ENCODE measurements at regions of chr19 and their contacts with region 1.

Region 1: DNA sequence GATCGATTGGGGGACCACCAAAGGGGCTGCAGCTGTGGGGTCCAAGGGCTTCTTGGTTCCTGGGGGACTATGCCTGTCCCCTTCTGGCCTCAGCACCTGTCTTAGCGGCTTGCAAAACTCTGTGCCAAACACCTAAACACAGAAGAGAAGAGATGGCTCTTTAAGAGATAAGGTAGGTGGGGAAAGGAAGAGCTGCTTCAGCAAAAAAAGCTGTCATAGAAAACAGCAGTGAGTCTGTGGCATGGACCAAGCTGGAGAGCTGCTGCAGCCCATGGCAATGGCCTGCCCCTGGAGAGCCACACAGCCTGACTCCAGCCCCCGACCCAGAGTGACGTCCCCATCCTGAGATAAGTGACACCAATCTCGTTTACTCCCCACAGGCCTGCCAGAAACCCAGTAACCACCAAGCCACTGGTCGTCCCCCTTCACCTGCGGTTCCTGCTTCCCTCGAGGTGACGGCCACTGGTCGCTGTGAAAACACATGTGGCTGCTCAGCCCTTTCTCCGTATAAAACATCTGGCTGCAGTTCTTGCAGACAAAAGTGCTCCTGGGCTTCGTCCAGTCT is 25.0 kb upstream of the NAPA start:
- DNase-seq: no peak
- ATAC-seq: no peak
- H3K4me3 ChIP-seq: no peak overlapping the region
- H3K27ac ChIP-seq: no peak overlapping the region
- H3K4me1 ChIP-seq: no peaks in the 10 kb centered on the region
- H3K27me3 ChIP-seq: peaks cover 0 to 11% (median 6%) of the 10 kb centered on the region in 3 donors
- CTCF ChIP-seq: no peak

Region 2: DNA sequence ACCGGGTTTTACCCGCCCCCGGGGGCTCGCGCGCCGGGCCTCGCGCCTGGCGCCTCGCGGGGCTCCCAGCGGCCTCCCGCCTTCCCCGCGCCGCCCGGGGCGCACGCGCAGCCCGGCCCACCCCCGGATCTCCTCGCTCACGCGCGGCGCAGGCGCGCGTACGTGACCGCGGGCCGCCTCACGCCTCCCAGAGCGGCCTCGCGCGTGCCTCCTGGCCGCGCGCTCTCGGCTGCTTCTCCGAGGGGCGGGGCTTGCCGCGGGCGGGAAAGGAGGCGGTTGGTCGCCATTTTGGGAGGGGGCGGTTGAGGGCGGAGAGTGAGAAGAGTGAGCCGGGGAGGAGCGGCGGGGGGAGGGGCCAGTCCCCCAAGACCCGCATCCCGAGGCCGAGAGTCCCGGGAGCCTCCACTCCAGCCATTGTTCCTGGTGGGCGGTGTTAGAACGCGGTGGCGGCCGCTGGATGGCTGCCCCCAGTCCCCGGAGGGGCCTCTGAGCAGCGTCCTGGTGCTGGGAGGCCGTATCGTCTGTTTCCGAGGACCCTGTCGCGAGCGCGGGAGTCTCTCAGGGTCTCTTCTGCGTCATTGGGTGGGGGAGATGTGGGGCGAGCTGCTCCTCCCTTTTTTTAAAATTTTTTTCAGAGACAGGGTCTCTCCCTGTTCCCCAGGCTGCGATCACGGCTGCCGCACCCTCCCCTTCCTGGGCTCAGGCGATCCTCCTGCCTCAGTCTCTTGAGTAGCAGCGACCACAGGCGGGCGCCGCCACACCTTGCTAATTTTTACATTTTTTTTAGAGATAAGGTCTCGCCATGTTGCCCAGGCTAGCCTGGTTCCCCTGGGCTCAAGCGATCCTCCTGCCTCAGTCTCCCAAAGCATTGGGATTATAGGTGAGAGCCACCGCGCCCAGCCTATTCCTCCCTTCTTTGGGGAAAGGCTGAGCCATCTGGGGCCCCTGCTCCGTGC is 33.5 kb after region 1 on chr19 and contains the start of gene ZNF541:
- intact Hi-C with region 1: loop called in 1 of 2 experiments (anchors 5 kb)
- DNase-seq: peak; percentile 72
- ATAC-seq: peak in 3 of 4 donors; percentile 44 to 57 (median 52)
- H3K4me3 ChIP-seq: peak within 1 kb of the TSS; percentile 58
- H3K27ac ChIP-seq: no peak within 1 kb of the TSS
- H3K4me1 ChIP-seq: no peaks in the 10 kb centered on the region
- H3K27me3 ChIP-seq: peaks cover 3 to 20% (median 5%) of the 10 kb centered on the region in 3 donors
- CTCF ChIP-seq: no peak
- total RNA-seq, gene ZNF541: 0.13 to 0.73 (median 0.32) TPM

Region 3: DNA sequence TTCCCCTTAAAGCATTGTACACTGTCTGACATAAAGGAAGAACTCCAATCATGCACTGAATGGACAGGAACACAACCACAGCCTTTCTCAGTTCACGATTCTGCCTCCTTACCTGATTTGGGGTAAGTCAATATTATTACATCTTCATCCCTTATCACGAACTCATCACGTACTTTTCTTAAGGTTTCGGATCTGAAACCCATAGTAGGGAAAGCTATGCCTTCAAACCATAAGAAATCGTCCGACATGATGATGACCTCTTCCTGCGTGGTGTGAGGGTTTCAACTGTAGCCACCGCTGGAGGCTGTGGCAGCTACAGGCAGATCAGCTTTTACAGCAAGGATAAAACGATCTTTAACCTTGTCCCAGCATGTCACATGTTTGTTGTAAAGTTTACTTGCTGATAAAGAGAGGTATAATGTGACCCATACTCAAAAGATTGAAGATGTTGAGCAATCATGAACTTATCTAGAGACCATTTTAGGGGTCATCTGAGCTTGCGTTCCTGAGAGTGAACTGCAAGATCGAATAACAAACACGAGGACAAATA is 346.3 kb after region 1 on chr19 and contains the start of gene SULT2A1:
- intact Hi-C with region 1: no loop called
- DNase-seq: no peak
- ATAC-seq: no peak
- H3K4me3 ChIP-seq: no peak within 1 kb of the TSS
- H3K27ac ChIP-seq: no peak within 1 kb of the TSS
- H3K4me1 ChIP-seq: no peaks in the 10 kb centered on the region
- H3K27me3 ChIP-seq: no peaks in the 10 kb centered on the region
- CTCF ChIP-seq: no peak
- total RNA-seq, gene SULT2A1: not detected